Naive thymus-derived CD4-positive, alpha-beta T cell (primary cell): ENCODE measurements at regions of chr1 and their contacts with region 1.

Region 1: DNA sequence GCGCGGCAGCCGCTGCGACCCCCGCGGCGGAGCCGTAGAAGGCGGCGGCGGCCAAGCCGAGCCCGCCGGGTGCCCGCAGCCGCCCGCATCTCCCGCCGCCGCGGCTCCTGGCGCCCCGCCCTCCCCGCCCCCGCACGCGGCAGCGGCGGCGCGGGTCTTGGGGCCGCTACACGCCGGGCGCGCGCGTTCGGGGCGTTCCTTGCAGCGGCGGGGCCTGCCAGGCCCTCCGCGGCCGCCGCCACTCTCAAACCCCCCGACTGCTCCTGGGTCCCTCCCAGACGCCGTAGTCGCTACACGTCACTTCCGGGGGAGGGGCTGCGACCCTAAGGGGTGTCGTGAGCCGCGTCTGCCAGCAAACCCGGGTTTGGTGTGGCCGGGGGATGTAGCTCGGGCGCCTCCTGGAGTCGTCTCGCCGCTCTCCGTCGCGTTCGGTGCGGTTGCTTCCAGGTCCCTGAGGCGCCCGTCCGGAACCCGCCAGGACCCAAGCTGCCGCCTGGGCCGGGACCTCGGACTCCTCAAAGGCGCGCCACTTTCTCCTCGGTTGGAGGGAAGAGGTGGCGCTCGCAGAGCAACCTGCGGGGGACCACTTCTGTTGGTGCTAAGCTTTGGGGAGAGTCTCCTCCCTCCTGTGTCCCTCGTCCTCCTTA is at the start of gene ELK4:
- DNase-seq: peak; percentile 98 to 100 (median 99)
- ATAC-seq: peak; percentile 92
- H3K4me3 ChIP-seq: peak within 1 kb of the TSS; percentile 84
- H3K4me3 Mint-ChIP-seq: peak within 1 kb of the TSS; percentile 85 to 100 (median 94)
- H3K27ac ChIP-seq: peak within 1 kb of the TSS; percentile 95
- H3K27ac Mint-ChIP-seq: peak within 1 kb of the TSS; percentile 89 to 99 (median 97)
- H3K4me1 ChIP-seq: peaks cover 20 to 33% of the 10 kb centered on the region in 2 donors
- H3K4me1 Mint-ChIP-seq: peaks cover 23 to 51% (median 37%) of the 10 kb centered on the region in 7 donors
- H3K27me3 ChIP-seq: no peaks in the 10 kb centered on the region
- H3K27me3 Mint-ChIP-seq: peaks cover 0 to 7% (median 0%) of the 10 kb centered on the region in 5 donors
- total RNA-seq, gene ELK4: 104 to 250 (median 156) TPM

Region 2: GRCh38 chr1:204411451-204412204 is 1220.2 kb before region 1 on chr1 and contains the start of gene PPP1R15B:
- CTCF ChIA-PET with region 1: no interaction called
- POLR2A ChIA-PET with region 1: no interaction called
- intact Hi-C with region 1: loop called in 1 of 2 experiments (anchors 5 kb)
- DNase-seq: peak; percentile 92 to 99 (median 98)
- ATAC-seq: peak; percentile 91
- H3K4me3 ChIP-seq: peak within 1 kb of the TSS; percentile 99
- H3K4me3 Mint-ChIP-seq: peak within 1 kb of the TSS; percentile 92 to 99 (median 97)
- H3K27ac ChIP-seq: peak within 1 kb of the TSS; percentile 100
- H3K27ac Mint-ChIP-seq: peak within 1 kb of the TSS; percentile 97 to 100 (median 99)
- H3K4me1 ChIP-seq: peaks cover 0 to 5% of the 10 kb centered on the region in 2 donors
- H3K4me1 Mint-ChIP-seq: peaks cover 8 to 23% (median 14%) of the 10 kb centered on the region in 7 donors
- H3K27me3 ChIP-seq: no peaks in the 10 kb centered on the region
- H3K27me3 Mint-ChIP-seq: no peaks in the 10 kb centered on the region
- total RNA-seq, gene PPP1R15B: 69.5 to 175 (median 73.0) TPM

Region 3: DNA sequence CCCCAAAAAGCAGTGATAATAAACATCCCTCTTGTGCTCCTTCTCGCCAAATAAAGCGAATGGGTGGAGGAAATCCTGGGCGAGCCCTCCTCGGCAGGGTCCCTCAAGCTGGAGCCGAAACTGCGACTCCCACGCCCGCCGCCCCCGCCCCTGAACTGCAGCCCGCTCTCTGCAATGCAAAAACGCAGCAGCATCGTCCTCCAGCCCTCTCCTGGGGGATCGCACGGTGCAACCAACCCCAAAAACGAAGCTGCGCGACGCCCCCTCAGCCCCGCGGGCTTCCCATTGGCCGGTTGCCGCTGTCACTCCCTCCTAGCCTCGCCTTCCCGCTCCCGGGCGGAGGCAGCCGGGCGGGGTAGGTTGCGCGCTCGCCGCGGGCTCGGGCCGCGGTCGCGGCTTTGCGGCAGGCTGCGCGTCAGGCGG is 404.3 kb before region 1 on chr1 and contains the start of gene TMCC2:
- CTCF ChIA-PET with region 1: no interaction called
- POLR2A ChIA-PET with region 1: no interaction called
- intact Hi-C with region 1: loop called in 1 of 2 experiments (anchors 5 kb)
- DNase-seq: peak; percentile 57 to 87 (median 73)
- ATAC-seq: peak; percentile 86
- H3K4me3 ChIP-seq: peak within 1 kb of the TSS; percentile 75
- H3K4me3 Mint-ChIP-seq: peak within 1 kb of the TSS; percentile 86 to 99 (median 94)
- H3K27ac ChIP-seq: peak within 1 kb of the TSS; percentile 1
- H3K27ac Mint-ChIP-seq: peak within 1 kb of the TSS; percentile 43 to 90 (median 82)
- H3K4me1 ChIP-seq: peaks cover 10 to 13% of the 10 kb centered on the region in 2 donors
- H3K4me1 Mint-ChIP-seq: peaks cover 12 to 51% (median 18%) of the 10 kb centered on the region in 7 donors
- H3K27me3 ChIP-seq: no peaks in the 10 kb centered on the region
- H3K27me3 Mint-ChIP-seq: peaks cover 0 to 44% (median 4%) of the 10 kb centered on the region in 5 donors
- total RNA-seq, gene TMCC2: 1.1 to 3.6 (median 1.8) TPM

Region 4: GRCh38 chr1:205300886-205301821 is 330.7 kb before region 1 on chr1:
- CTCF ChIA-PET with region 1: no interaction called
- POLR2A ChIA-PET with region 1: no interaction called
- intact Hi-C with region 1: no loop called
- DNase-seq: no peak
- ATAC-seq: no peak
- H3K4me3 ChIP-seq: no peak overlapping the region
- H3K4me3 Mint-ChIP-seq: no peak overlapping the region
- H3K27ac ChIP-seq: no peak overlapping the region
- H3K27ac Mint-ChIP-seq: peak overlapping the region in 8 of 9 donors; percentile 25 to 84 (median 75)
- H3K4me1 ChIP-seq: peaks cover 3 to 7% of the 10 kb centered on the region in 2 donors
- H3K4me1 Mint-ChIP-seq: peaks cover 30 to 73% (median 57%) of the 10 kb centered on the region in 7 donors
- H3K27me3 ChIP-seq: no peaks in the 10 kb centered on the region
- H3K27me3 Mint-ChIP-seq: peaks cover 0 to 2% (median 0%) of the 10 kb centered on the region in 5 donors

Region 5: GRCh38 chr1:205591522-205592351 is 40.1 kb before region 1 on chr1:
- CTCF ChIA-PET with region 1: interaction called, 143 read pairs
- POLR2A ChIA-PET with region 1: interaction called, 290 read pairs
- intact Hi-C with region 1: loop called (anchors 1 kb)
- DNase-seq: peak; percentile 86 to 94 (median 91)
- ATAC-seq: peak; percentile 95
- H3K4me3 ChIP-seq: peak overlapping the region; percentile 55
- H3K4me3 Mint-ChIP-seq: peak overlapping the region; percentile 77 to 97 (median 91)
- H3K27ac ChIP-seq: peak overlapping the region; percentile 85
- H3K27ac Mint-ChIP-seq: peak overlapping the region; percentile 88 to 97 (median 95)
- H3K4me1 ChIP-seq: peaks cover 8 to 32% of the 10 kb centered on the region in 2 donors
- H3K4me1 Mint-ChIP-seq: peaks cover 19 to 65% (median 61%) of the 10 kb centered on the region in 7 donors
- H3K27me3 ChIP-seq: no peaks in the 10 kb centered on the region
- H3K27me3 Mint-ChIP-seq: peaks cover 0 to 4% (median 0%) of the 10 kb centered on the region in 5 donors

Region 6: DNA sequence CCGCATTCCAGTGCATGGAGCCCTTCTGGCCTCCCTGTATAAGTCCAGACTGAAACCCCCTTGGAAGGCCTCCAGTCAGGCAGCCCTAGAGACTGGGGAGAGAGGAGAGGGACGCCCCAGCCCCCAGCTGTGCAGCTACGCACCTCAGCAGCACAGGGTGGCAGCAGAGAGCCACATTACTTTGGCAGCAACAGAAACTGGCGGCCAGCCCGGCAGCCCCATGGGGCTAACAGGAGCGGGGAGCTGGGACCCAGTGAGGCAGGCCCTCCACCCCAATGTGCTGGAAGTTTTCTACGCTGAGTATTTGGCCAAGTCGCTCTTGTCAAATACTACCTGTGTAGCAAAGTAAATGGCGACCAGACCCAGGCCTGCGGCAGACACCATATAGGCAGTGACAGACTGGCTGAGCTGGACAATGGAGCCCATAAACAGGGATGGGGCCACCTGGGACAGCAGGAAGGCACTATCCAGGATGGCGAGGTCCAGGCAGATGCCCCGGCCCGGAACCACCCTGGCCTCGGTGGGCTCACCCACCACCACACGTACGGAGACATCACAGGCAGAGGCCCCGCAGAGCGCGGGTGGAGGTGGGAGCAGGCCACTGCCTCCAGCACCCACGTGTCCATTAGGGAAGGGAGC is 27.2 kb after region 1 on chr1:
- CTCF ChIA-PET with region 1: interaction called, 53 read pairs
- POLR2A ChIA-PET with region 1: interaction called, 20 read pairs
- intact Hi-C with region 1: loop called (anchors 1 kb)
- DNase-seq: peak; percentile 39 to 76 (median 65)
- ATAC-seq: peak; percentile 91
- H3K4me3 ChIP-seq: no peak overlapping the region
- H3K4me3 Mint-ChIP-seq: no peak overlapping the region
- H3K27ac ChIP-seq: no peak overlapping the region
- H3K27ac Mint-ChIP-seq: peak overlapping the region in 1 of 9 donors; percentile 50
- H3K4me1 ChIP-seq: no peaks in the 10 kb centered on the region
- H3K4me1 Mint-ChIP-seq: peaks cover 0 to 9% (median 0%) of the 10 kb centered on the region in 7 donors
- H3K27me3 ChIP-seq: no peaks in the 10 kb centered on the region
- H3K27me3 Mint-ChIP-seq: peaks cover 0 to 5% (median 0%) of the 10 kb centered on the region in 5 donors

Region 7: DNA sequence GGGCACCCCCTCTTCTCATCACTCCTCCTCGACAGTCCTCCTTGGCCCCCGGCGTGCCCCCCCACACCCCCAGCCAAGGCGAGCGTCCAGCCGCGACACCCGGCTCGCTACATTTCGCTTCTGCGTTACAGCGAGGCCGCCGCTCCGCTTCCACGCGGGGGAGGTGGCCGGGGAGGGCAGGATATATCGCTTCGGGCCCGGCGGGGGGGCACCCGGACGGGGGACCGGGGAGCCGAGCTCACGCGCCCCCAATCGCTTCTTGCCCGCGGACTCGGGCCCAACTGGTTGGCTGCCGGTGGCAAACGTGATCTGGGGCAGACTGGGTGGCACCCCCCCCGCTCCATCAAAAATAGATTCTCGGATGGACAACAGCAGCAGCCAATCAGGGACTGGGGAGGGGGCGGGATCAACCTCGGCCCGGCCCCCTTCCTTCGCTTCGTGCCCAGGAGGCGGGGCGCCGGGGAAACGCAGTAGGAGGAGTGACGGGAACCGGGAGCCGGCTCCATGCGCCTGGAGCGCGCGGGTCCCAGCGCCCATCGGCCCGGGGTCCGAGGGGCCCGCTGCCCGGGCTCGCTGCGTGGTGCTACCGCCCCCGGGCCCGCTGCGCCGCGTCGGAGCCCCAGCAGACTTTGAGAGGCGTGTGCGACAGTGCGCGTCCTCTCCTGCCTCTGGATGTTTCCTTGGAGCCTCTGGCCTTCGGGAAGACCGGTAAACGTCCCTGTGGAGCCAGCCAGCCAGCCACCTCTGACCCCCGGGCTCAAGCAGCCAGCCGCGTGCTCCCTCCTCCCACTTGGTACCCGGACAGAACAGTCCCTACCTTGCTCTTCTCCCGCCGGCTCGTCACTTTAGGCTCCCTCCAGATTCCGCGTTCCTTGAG is 181.3 kb after region 1 on chr1 and contains the start of gene SLC41A1:
- CTCF ChIA-PET with region 1: no interaction called
- POLR2A ChIA-PET with region 1: interaction called, 3 read pairs
- intact Hi-C with region 1: loop called in 1 of 2 experiments (anchors 1 kb)
- DNase-seq: peak; percentile 71 to 96 (median 91)
- ATAC-seq: peak; percentile 98
- H3K4me3 ChIP-seq: peak within 1 kb of the TSS; percentile 69
- H3K4me3 Mint-ChIP-seq: peak within 1 kb of the TSS; percentile 88 to 94 (median 92)
- H3K27ac ChIP-seq: peak within 1 kb of the TSS; percentile 87
- H3K27ac Mint-ChIP-seq: peak within 1 kb of the TSS; percentile 79 to 97 (median 92)
- H3K4me1 ChIP-seq: peaks cover 23 to 36% of the 10 kb centered on the region in 2 donors
- H3K4me1 Mint-ChIP-seq: peaks cover 38 to 63% (median 60%) of the 10 kb centered on the region in 7 donors
- H3K27me3 ChIP-seq: no peaks in the 10 kb centered on the region
- H3K27me3 Mint-ChIP-seq: peaks cover 0 to 15% (median 0%) of the 10 kb centered on the region in 5 donors
- total RNA-seq, gene SLC41A1: 16.5 to 32.0 (median 27.8) TPM